BJ (cell line): ENCODE measurements at regions of chr1 and their contacts with region 1.

Region 1: DNA sequence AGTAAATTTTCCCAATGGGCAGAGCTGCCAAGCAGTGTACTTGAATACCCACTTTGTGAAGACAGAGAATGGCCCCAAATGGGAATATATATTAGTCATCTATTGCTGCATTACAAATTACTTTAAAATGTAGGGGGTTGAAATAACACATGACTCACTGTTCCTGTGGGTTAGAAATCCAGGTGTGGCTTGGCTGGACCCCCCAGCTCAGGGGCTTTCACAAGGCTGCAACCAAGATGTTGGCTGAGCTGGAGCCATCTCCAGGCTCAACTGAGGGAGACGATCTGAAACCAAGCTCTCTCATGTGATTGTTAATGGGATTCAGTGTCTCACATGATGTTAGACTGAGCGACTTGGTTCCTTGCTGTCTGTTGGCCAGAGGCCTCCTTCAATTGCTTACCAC is 33.4 kb upstream of the ARHGAP29 start:
- DNase-seq: no peak
- H3K4me3 ChIP-seq: no peak overlapping the region
- H3K27me3 ChIP-seq: no peaks in the 10 kb centered on the region
- CTCF ChIP-seq: no peak

Region 2: GRCh38 chr1:94094469-94095111 is 176.2 kb before region 1 on chr1:
- CTCF ChIA-PET with region 1: no interaction called
- POLR2A ChIA-PET with region 1: interaction called, 12 read pairs
- DNase-seq: no peak
- H3K4me3 ChIP-seq: no peak overlapping the region
- H3K27me3 ChIP-seq: no peaks in the 10 kb centered on the region
- CTCF ChIP-seq: no peak

Region 3: GRCh38 chr1:94218332-94218731 is 52.5 kb before region 1 on chr1:
- CTCF ChIA-PET with region 1: no interaction called
- POLR2A ChIA-PET with region 1: no interaction called
- DNase-seq: no peak
- H3K4me3 ChIP-seq: no peak overlapping the region
- H3K27me3 ChIP-seq: no peaks in the 10 kb centered on the region
- CTCF ChIP-seq: no peak

Region 4: GRCh38 chr1:94258873-94259331 is 11.9 kb before region 1 on chr1:
- CTCF ChIA-PET with region 1: interaction called, 17 read pairs
- POLR2A ChIA-PET with region 1: no interaction called
- DNase-seq: peak; percentile 95
- H3K4me3 ChIP-seq: no peak overlapping the region
- H3K27me3 ChIP-seq: no peaks in the 10 kb centered on the region
- CTCF ChIP-seq: no peak

Region 5: DNA sequence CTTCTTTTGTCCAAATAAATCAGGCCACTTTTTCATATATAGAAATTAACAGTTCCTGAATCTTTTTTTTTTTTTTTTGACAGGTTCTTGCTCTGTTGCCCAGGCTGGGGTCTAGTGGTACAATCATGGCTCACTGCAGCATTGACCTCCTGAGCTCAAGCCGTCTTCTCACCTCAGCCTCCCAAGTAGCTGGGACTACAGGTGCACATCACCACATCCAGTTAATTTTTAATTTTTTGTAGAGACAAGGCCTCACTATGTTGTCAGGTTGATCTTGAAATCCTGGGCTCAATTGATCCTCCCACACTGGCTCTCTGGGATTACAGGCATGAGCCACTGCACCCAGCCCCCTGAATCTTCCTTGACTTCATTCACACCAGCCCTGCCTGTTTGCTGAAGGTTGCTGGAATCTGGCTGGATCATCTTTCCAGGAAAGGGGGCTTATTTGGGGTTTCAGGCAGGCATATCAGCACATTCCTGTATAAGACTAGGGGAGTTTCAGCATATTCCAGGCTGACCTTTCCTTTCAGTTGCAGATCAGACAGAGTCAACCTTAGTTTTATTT is 44.8 kb after region 1 on chr1:
- CTCF ChIA-PET with region 1: no interaction called
- POLR2A ChIA-PET with region 1: interaction called, 13 read pairs
- DNase-seq: no peak
- H3K4me3 ChIP-seq: no peak overlapping the region
- H3K27me3 ChIP-seq: no peaks in the 10 kb centered on the region
- CTCF ChIP-seq: no peak